Motor neuron (in vitro differentiated cells): ENCODE measurements at regions of chr3 and their contacts with region 1.

Region 1: DNA sequence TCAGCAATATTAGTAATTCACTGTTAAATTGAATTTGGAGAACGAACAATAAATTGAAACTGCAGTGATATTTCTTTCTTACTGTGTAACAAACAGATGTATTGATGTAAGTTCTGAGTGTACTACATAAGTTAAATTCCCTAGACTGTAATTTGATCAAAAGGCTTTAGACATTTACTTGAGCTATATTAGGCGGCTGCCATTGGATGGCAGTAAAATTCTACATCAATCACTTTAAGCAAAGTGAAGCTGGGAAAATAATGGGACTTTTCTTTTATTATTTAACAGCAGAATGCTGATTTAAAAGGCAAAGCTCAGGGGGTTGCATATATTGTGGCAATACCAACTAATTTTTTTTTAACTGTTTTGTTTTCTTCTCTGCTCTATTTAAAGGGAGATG is 212.6 kb upstream of the PLSCR5 start:
- ATAC-seq: peak in 6 of 8 experiments; percentile 42 to 94 (median 58)
- H3K4me3 ChIP-seq: no peak overlapping the region
- H3K27ac ChIP-seq: no peak overlapping the region
- H3K4me1 ChIP-seq: peaks cover 0 to 6% of the 10 kb centered on the region in 2 donors

Region 2: DNA sequence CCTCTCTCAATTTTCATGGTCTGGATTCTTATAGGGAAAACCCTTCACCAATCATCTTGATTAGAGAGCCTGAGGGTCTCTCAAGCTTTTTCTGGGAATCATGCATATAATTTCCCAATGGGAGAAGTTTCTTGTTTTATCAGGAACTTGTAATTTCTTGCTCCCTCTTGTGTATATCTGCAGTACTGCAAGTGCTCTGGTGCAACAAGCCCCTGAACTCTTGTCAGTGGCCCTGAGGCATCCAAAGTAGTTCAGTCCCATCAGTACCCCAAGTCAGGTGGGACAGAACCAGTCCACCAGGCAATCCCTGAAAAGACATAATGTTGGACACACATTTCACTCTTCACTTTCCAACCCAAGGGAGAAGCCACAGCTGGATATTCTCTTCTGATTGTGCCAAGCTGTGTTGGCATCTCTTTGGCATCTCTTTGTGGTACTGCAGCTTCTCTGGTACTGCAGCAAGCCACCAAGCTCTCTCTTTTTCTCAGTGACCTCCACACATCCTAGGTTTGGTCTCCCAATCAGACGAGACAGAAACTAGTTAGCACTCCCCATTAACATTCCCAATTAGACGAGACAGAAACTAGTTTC is 374.2 kb after region 1 on chr3:
- in situ Hi-C with region 1: loop called in 1 of 9 experiments (anchors 25 kb)
- ATAC-seq: peak in 1 of 8 experiments; percentile 43
- H3K4me3 ChIP-seq: no peak overlapping the region
- H3K27ac ChIP-seq: no peak overlapping the region
- H3K4me1 ChIP-seq: no peaks in the 10 kb centered on the region

Region 3: GRCh38 chr3:147391781-147392624 is 574.3 kb after region 1 on chr3:
- in situ Hi-C with region 1: loop called in 1 of 9 experiments (anchors 25 kb)
- ATAC-seq: peak; percentile 75 to 89 (median 82)
- H3K4me3 ChIP-seq: peak overlapping the region; percentile 16 to 40 (median 34)
- H3K27ac ChIP-seq: no peak overlapping the region
- H3K4me1 ChIP-seq: peaks cover 3 to 4% of the 10 kb centered on the region in 2 donors

Region 4: GRCh38 chr3:147616998-147617619 is 799.4 kb after region 1 on chr3:
- in situ Hi-C with region 1: loop called in 1 of 9 experiments (anchors 25 kb)
- ATAC-seq: no peak
- H3K4me3 ChIP-seq: no peak overlapping the region
- H3K27ac ChIP-seq: no peak overlapping the region
- H3K4me1 ChIP-seq: peaks cover 8 to 19% of the 10 kb centered on the region in 2 donors